Breast epithelium (tissue), 4 donors: ENCODE measurements at regions of chr10 and their contacts with region 1.

Region 1: GRCh38 chr10:72616716-72617115 is 9.2 kb downstream of the MICU1 start:
- DNase-seq: no peak
- H3K4me3 ChIP-seq: no peak overlapping the region
- H3K27ac ChIP-seq: no peak overlapping the region
- H3K4me1 ChIP-seq: no peaks in the 10 kb centered on the region
- H3K27me3 ChIP-seq: no peaks in the 10 kb centered on the region
- CTCF ChIP-seq: no peak
- POLR2A ChIP-seq: no peak

Region 2: DNA sequence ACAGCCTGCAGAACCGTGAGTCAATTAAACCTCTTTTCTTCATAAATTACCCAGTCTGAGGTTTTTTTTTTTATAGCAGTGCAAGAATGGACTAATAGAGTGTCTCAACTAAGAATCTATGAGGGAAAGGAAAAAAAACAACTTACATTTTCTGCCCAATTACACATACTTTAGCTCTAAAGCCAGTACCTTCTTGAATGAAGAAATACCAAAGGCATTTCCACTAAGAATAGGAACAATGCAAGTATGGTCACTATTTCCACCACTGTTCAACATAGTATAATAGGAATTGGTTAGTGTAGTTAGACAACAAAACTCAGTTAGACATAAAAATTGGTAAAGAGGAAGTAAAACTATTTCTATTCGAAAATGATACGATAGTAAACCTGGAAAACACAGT is 28.4 kb before region 1 on chr10:
- intact Hi-C with region 1: loop called (anchors 2 kb)
- DNase-seq: no peak
- H3K4me3 ChIP-seq: no peak overlapping the region
- H3K27ac ChIP-seq: no peak overlapping the region
- H3K4me1 ChIP-seq: no peaks in the 10 kb centered on the region
- H3K27me3 ChIP-seq: no peaks in the 10 kb centered on the region
- CTCF ChIP-seq: no peak
- POLR2A ChIP-seq: no peak

Region 3: DNA sequence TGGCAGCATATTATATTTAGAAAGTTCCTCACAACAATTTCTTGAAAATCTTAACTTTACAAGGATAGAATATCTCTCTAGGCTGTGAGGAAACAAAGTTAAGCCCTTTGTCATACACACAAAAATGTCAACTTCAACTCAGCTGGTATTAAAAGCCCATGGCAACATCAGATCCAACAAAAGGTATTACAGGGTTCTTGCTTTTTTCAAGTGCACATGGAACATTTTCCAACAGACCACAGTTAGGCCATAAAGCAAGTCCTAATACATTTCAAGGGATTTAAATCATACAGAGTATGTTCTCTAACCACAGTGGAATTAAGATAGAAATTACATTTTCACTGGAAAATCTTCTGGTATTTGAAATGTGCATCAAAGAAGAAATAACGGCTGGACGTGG is 204.9 kb after region 1 on chr10:
- intact Hi-C with region 1: loop called (anchors 5 kb)
- DNase-seq: no peak
- H3K4me3 ChIP-seq: no peak overlapping the region
- H3K27ac ChIP-seq: no peak overlapping the region
- H3K4me1 ChIP-seq: no peaks in the 10 kb centered on the region
- H3K27me3 ChIP-seq: no peaks in the 10 kb centered on the region
- CTCF ChIP-seq: no peak
- POLR2A ChIP-seq: no peak